ENCODE measurements at regions of chr2 and their contacts with region 1.

Region 1: GRCh38 chr2:25817006-25817405 is 61.3 kb downstream of the ASXL2 start:
- DNase-seq: no peak
- ATAC-seq: no peak
- H3K4me3 ChIP-seq: no peak overlapping the region
- H3K27ac ChIP-seq: no peak overlapping the region
- H3K4me1 ChIP-seq: peaks cover 10% of the 10 kb centered on the region
- H3K27me3 ChIP-seq: no peaks in the 10 kb centered on the region
- CTCF ChIP-seq: no peak

Region 2: GRCh38 chr2:25867396-25868003 is 50.5 kb after region 1 on chr2:
- CTCF ChIA-PET with region 1: interaction called, 16 read pairs
- POLR2A ChIA-PET with region 1: no interaction called
- intact Hi-C with region 1: no loop called
- DNase-seq: no peak
- ATAC-seq: no peak
- H3K4me3 ChIP-seq: no peak overlapping the region
- H3K27ac ChIP-seq: no peak overlapping the region
- H3K4me1 ChIP-seq: no peaks in the 10 kb centered on the region
- H3K27me3 ChIP-seq: no peaks in the 10 kb centered on the region
- CTCF ChIP-seq: no peak